PC-3 (cell line): ENCODE measurements at regions of chr6 and their contacts with region 1.

Region 1: GRCh38 chr6:81752138-81752920 is at the start of gene TENT5A:
- DNase-seq: peak; percentile 84
- ATAC-seq: peak; percentile 62
- H3K4me3 ChIP-seq: peak within 1 kb of the TSS; percentile 77
- H3K27ac ChIP-seq: peak within 1 kb of the TSS; percentile 75
- H3K4me1 ChIP-seq: peaks cover 16% of the 10 kb centered on the region
- H3K27me3 ChIP-seq: no peaks in the 10 kb centered on the region
- CTCF ChIP-seq: peak; percentile 21; the same call in 1 of the 2 replicates
- total RNA-seq, gene TENT5A: 5.6 and 6.4 TPM in 2 replicates

Region 2: DNA sequence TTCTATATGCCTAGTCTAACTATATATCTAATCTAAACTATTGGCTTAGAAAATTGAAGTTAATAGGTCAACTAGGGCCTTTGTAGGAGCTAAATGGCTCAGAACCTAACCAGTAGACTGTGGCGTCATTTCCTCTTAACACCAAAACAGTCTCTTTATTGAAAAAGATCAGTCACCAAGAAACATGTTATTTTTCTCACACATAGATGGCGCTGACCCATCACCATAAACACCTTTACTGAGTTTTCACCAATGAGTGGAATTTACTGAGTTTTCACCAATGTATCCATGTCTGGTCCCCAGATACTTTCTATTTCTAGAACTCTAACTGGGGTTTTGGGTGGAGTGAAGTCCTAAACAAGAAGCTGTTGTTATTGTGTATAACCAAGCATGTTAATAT is 1009.8 kb before region 1 on chr6:
- CTCF ChIA-PET with region 1: no interaction called
- POLR2A ChIA-PET with region 1: no interaction called
- intact Hi-C with region 1: loop called (anchors 5 kb)
- DNase-seq: peak; percentile 45
- ATAC-seq: peak; percentile 49
- H3K4me3 ChIP-seq: no peak overlapping the region
- H3K27ac ChIP-seq: no peak overlapping the region
- H3K4me1 ChIP-seq: no peaks in the 10 kb centered on the region
- H3K27me3 ChIP-seq: no peaks in the 10 kb centered on the region
- CTCF ChIP-seq: peak; percentile 56

Region 3: GRCh38 chr6:81241126-81242041 is 510.9 kb before region 1 on chr6:
- CTCF ChIA-PET with region 1: interaction called, 5 read pairs
- POLR2A ChIA-PET with region 1: no interaction called
- intact Hi-C with region 1: loop called (anchors 2 kb)
- DNase-seq: peak; percentile 52
- ATAC-seq: peak; percentile 37
- H3K4me3 ChIP-seq: no peak overlapping the region
- H3K27ac ChIP-seq: no peak overlapping the region
- H3K4me1 ChIP-seq: no peaks in the 10 kb centered on the region
- H3K27me3 ChIP-seq: no peaks in the 10 kb centered on the region
- CTCF ChIP-seq: peak; percentile 62

Region 4: DNA sequence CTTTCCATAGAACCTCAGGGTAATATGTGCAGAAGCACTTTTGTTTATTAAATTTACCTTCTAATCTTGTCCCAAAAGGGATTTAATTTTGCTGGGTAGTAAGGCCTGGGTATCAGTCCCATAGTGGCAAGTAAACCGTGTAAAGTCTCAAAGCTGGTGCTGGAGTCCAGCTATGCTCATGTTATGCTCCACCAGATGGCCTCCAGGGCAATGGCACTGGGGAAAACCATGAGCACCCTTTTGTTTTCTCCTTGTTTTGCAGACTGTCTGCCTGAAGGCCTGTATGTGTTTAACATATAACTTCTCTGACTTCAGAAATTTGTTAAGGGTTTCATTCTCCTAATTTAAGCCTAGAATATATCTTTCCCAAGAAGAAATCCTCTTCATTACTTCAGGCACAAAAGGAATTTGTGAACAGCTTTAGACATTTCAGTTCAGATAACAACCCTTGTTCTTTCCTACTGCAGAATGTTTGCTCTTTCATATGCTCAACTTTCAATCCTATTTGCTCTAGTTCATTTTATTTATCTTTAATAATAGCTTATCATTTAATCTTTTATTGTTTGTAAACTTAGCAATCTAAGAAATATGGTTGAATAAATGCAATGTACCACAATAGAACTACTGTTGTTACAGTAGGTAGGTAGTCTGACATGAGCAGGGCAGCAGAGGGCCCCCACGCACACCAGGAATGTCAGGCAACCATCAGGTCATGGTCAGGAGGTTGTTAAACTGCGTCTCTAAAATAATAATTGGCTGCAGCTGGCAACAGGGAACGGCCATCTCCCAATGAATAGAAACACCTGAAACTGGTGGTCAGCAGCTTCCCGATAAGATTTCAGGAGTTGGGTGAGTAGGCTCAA is 162.6 kb before region 1 on chr6:
- CTCF ChIA-PET with region 1: no interaction called
- POLR2A ChIA-PET with region 1: no interaction called
- intact Hi-C with region 1: loop called (anchors 2 kb)
- DNase-seq: peak; percentile 17
- ATAC-seq: peak; percentile 69
- H3K4me3 ChIP-seq: no peak overlapping the region
- H3K27ac ChIP-seq: no peak overlapping the region
- H3K4me1 ChIP-seq: no peaks in the 10 kb centered on the region
- H3K27me3 ChIP-seq: no peaks in the 10 kb centered on the region
- CTCF ChIP-seq: peak; percentile 43

Region 5: DNA sequence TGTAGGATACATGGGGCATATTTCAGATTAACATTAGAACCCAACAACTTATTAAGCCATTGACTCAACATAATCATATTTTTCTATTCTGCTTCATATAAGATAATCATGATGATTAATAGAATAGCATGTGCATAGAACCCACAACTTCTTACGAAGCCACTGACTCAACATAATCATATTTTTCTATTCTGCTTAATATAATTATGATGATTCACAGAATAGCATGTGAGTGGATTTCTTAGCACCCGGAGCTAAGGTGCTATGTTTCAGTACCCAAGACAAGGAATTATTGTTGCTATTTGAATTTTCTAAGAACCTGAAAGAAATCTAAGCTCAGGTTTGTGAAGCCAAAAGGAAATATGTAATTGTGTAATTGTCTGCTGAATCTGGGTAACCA is 96.6 kb before region 1 on chr6:
- CTCF ChIA-PET with region 1: no interaction called
- POLR2A ChIA-PET with region 1: no interaction called
- intact Hi-C with region 1: no loop called
- DNase-seq: no peak
- ATAC-seq: no peak
- H3K4me3 ChIP-seq: no peak overlapping the region
- H3K27ac ChIP-seq: no peak overlapping the region
- H3K4me1 ChIP-seq: no peaks in the 10 kb centered on the region
- H3K27me3 ChIP-seq: no peaks in the 10 kb centered on the region
- CTCF ChIP-seq: no peak

Region 6: GRCh38 chr6:81981812-81982211 is 229.5 kb after region 1 on chr6:
- CTCF ChIA-PET with region 1: no interaction called
- POLR2A ChIA-PET with region 1: no interaction called
- intact Hi-C with region 1: loop called (anchors 2 kb)
- DNase-seq: peak; percentile 83
- ATAC-seq: peak; percentile 82
- H3K4me3 ChIP-seq: peak overlapping the region; percentile 28; the same call in 1 of the 2 replicates
- H3K27ac ChIP-seq: peak overlapping the region; percentile 53
- H3K4me1 ChIP-seq: peaks cover 52% of the 10 kb centered on the region
- H3K27me3 ChIP-seq: no peaks in the 10 kb centered on the region
- CTCF ChIP-seq: no peak